Activated B cell treated with CpG ODN at 0.5 μM for 24 hours (primary cell): ENCODE measurements at regions of chr20 and their contacts with region 1.

Region 1: DNA sequence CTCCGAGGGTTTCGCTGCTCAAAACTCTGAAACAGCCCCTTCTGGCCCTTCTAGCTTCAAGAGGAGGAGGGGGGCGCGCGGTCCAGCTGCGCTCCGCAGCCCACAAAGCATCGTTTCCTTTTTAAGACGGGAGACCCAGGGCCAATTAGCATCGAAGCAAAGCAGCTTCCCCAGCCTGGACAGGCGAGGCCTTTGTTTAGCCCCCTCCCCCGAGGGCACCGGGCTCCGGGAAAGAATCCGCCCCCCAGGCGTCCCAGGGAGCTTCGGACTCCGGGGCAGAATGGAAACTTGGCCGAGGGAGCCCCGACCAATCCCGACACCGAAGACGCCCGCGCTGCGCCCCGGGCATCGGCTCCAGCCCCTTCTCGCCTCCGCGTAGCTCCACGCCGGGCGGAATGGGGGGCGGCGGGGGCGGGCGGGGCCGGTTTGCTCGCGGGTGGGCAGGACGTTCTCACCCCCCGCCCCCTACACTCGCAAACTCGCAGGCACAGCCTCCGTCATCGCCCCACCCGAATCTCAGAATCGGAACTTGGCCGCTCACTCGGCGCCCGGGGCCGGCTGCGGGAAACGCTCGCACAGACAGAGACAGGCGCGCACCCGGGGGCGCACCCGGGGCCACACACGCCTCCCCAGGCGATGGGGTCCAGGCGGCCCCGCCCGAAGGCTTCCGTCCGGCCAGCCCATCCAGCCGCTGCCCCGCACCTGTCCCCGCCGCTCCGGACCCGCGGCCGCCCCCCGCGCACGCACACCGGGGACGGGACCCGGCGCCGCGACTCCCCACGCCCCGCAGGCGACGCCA is 626 bp downstream of the NKAIN4 start:
- DNase-seq: no peak
- ATAC-seq: no peak
- H3K4me3 Mint-ChIP-seq: peak overlapping the region; percentile 64
- H3K27ac Mint-ChIP-seq: no peak overlapping the region
- H3K4me1 Mint-ChIP-seq: peaks cover 14% of the 10 kb centered on the region
- H3K27me3 Mint-ChIP-seq: peaks cover 41% of the 10 kb centered on the region
- CTCF ChIP-seq: no peak

Region 2: DNA sequence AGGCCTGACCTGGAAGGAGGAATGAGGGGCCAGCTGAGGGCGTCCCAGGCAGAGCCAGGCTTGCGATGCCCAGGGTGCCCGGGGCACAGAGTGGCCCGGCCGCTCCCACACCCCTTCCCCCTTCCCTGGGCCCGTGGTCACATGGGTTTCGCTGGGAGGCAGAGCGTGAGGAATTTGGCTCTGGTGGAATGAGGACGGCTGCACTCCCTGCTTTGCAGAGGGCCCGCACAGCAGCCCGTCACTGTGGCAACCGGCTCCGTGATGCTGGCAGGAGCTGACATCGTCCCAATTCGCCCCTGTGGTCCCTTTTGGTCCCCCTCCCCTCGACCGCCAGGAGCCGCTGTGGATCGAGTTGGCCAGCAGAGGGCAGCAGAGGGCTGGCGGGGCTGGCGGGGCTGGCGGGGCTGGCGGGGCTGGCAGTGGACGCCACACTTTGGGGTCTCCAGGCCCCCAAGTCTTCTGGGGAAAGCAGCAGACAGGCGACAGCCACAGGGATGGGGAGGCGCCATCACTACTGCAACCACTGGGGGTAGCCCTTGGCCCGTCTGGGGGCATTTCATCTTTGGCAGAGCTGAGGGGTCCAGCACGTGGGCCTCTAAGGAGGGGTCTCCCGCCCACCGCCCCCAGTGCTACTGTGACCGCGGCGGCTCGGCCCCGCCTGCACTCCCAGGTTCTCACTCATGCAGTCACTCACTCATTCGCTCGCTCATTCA is 197.2 kb before region 1 on chr20:
- CTCF ChIA-PET with region 1: no interaction called
- POLR2A ChIA-PET with region 1: no interaction called
- intact Hi-C with region 1: loop called (anchors 10 kb)
- DNase-seq: peak; percentile 47
- ATAC-seq: peak; percentile 57
- H3K4me3 Mint-ChIP-seq: no peak overlapping the region
- H3K27ac Mint-ChIP-seq: no peak overlapping the region
- H3K4me1 Mint-ChIP-seq: no peaks in the 10 kb centered on the region
- H3K27me3 Mint-ChIP-seq: peaks cover 13% of the 10 kb centered on the region
- CTCF ChIP-seq: peak; percentile 52